ENCODE measurements at regions of chr2 and their contacts with region 1.

Region 1: DNA sequence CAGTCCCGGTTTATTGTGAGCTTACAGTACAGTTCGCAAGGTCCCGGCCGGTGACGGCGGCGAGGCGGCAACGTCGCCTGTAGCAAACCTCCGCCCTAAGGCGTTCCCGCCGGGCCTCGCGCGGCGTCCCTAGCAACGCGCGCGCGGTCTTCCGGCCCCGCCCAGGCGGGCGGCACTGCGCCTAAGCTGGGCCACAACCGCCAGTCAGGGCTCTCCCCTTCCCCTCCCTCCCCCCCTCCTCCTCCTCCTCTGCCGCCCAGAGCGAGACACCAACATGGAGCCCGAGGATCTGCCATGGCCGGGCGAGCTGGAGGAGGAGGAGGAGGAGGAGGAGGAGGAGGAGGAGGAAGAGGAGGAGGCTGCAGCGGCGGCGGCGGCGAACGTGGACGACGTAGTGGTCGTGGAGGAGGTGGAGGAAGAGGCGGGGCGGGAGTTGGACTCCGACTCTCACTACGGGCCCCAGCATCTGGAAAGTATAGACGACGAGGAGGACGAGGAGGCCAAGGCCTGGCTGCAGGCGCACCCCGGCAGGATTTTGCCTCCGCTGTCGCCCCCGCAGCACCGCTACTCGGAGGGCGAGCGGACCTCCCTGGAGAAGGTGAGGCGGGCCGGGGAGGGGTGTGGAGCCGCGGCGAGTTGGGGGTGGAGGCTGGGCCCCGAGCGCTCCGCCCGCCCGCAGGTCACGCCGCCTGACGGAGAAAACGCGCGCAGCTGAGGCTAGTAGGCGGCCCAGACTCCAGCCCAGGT is at the start of gene ALMS1:
- DNase-seq: peak; percentile 92
- ATAC-seq: peak; percentile 82
- H3K4me3 Mint-ChIP-seq: peak within 1 kb of the TSS; percentile 93
- H3K27ac Mint-ChIP-seq: peak within 1 kb of the TSS; percentile 89
- H3K4me1 Mint-ChIP-seq: peaks cover 27% of the 10 kb centered on the region
- H3K27me3 Mint-ChIP-seq: peaks cover 11% of the 10 kb centered on the region
- total RNA-seq, gene ALMS1: 20.1 to 22.4 TPM

Region 2: GRCh38 chr2:73284296-73285158 is 101.2 kb before region 1 on chr2 and contains the start of gene FBXO41:
- POLR2A ChIA-PET with region 1: interaction called, 13 read pairs
- DNase-seq: peak; percentile 85
- ATAC-seq: peak; percentile 80
- H3K4me3 Mint-ChIP-seq: peak within 1 kb of the TSS; percentile 86
- H3K27ac Mint-ChIP-seq: peak within 1 kb of the TSS; percentile 81
- H3K4me1 Mint-ChIP-seq: peaks cover 35% of the 10 kb centered on the region
- H3K27me3 Mint-ChIP-seq: peaks cover 10% of the 10 kb centered on the region
- total RNA-seq, gene FBXO41: 33.6 to 35.7 TPM

Region 3: GRCh38 chr2:73293534-73294171 is 92.1 kb before region 1 on chr2 and contains the start of gene EGR4:
- POLR2A ChIA-PET with region 1: interaction called, 10 read pairs
- DNase-seq: peak; percentile 85
- ATAC-seq: peak; percentile 89
- H3K4me3 Mint-ChIP-seq: peak within 1 kb of the TSS; percentile 74
- H3K27ac Mint-ChIP-seq: no peak within 1 kb of the TSS
- H3K4me1 Mint-ChIP-seq: peaks cover 4% of the 10 kb centered on the region
- H3K27me3 Mint-ChIP-seq: peaks cover 75% of the 10 kb centered on the region
- total RNA-seq, gene EGR4: not detected

Region 4: GRCh38 chr2:73359915-73360697 is 25.7 kb before region 1 on chr2:
- POLR2A ChIA-PET with region 1: no interaction called
- DNase-seq: no peak
- ATAC-seq: no peak
- H3K4me3 Mint-ChIP-seq: no peak overlapping the region
- H3K27ac Mint-ChIP-seq: no peak overlapping the region
- H3K4me1 Mint-ChIP-seq: no peaks in the 10 kb centered on the region
- H3K27me3 Mint-ChIP-seq: peaks cover 11% of the 10 kb centered on the region

Region 5: GRCh38 chr2:73436019-73436418 is 50.3 kb after region 1 on chr2:
- POLR2A ChIA-PET with region 1: no interaction called
- DNase-seq: no peak
- ATAC-seq: no peak
- H3K4me3 Mint-ChIP-seq: no peak overlapping the region
- H3K27ac Mint-ChIP-seq: no peak overlapping the region
- H3K4me1 Mint-ChIP-seq: no peaks in the 10 kb centered on the region
- H3K27me3 Mint-ChIP-seq: no peaks in the 10 kb centered on the region

Region 6: GRCh38 chr2:73494031-73494430 is 108.3 kb after region 1 on chr2:
- POLR2A ChIA-PET with region 1: no interaction called
- DNase-seq: no peak
- ATAC-seq: no peak
- H3K4me3 Mint-ChIP-seq: no peak overlapping the region
- H3K27ac Mint-ChIP-seq: no peak overlapping the region
- H3K4me1 Mint-ChIP-seq: peaks cover 4% of the 10 kb centered on the region
- H3K27me3 Mint-ChIP-seq: no peaks in the 10 kb centered on the region

Measured in activated naive CD8-positive, alpha-beta T cell treated with anti-CD3 and anti-CD28 coated beads, Interleukin-2, amount 10 ng/mL, durations not matched to agents 7 days and 5 days (primary cell).